Activated naive CD4-positive, alpha-beta T cell treated with anti-CD3 and anti-CD28 coated beads, Interleukin-2, amount 10 ng/mL, durations not matched to agents 7 days and 5 days (primary cell): ENCODE measurements at regions of chr17 and their contacts with region 1.

Region 1: GRCh38 chr17:75896415-75897159 is at the start of gene TRIM65:
- DNase-seq: peak; percentile 84
- H3K4me3 Mint-ChIP-seq: peak within 1 kb of the TSS; percentile 81
- H3K27ac Mint-ChIP-seq: peak within 1 kb of the TSS; percentile 89
- H3K4me1 Mint-ChIP-seq: peaks cover 26% of the 10 kb centered on the region
- H3K27me3 Mint-ChIP-seq: no peaks in the 10 kb centered on the region

Region 2: DNA sequence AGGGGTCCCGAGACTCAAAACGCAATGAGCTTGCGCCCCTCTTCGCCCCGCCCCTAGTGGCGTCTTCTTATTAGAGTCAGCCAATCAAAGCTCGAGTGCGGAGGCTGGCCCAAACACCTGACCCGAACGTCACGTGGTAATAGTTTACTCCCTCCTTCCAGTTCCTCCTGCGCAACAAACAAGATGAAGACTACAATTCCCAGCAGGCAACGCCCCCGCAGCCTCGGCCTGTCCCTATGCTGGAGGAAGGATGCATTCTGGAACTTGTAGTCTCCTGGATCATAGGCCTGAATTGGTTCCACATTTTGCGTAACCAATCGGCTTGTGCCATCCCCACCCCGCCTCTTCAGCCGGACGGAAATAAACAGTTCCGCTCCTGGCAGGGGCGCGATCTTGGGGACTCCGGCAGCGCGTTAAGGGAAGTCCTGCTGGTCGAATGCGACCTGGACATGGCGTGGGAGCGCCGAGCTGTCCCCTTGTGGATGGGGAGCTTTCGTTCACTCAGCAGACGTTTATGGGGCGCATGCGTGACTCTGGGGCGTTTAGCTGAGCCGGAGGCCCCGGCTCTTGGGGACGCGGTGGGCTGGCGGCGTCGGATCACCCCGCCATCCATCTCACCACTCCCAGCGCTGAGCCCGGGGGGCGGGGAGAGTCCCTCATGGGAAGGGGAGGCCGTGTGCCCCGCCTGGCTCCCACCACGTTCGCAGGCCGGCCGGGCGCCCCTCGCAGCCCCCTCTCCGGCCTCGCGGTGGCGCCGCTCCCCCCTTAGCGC is 41.1 kb before region 1 on chr17 and contains the start of gene WBP2:
- CTCF ChIA-PET with region 1: interaction called, 30 read pairs
- DNase-seq: peak; percentile 99
- H3K4me3 Mint-ChIP-seq: no peak within 1 kb of the TSS
- H3K27ac Mint-ChIP-seq: peak within 1 kb of the TSS; percentile 91
- H3K4me1 Mint-ChIP-seq: peaks cover 43% of the 10 kb centered on the region
- H3K27me3 Mint-ChIP-seq: no peaks in the 10 kb centered on the region

Region 3: DNA sequence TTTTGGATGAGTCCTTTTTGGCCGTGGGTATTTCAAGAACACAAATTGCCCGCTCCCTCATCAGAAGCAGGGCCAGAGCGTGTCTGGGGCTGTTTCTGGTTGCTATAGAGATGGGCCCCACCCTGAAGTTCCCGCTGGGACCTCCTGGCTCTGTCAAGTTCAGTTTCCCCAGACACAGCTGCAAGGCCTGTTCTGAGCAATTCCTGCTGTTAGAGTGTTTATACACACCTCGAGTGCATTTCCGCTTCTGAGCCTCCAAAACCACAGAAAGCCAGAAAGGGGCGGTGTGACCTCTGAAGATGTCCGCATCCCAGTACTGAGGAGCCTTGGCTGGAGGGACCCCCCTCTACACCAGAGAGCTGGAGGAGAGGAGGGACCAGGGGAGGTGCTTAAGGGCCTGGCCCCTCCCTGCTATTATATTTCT is 32.1 kb before region 1 on chr17:
- CTCF ChIA-PET with region 1: interaction called, 30 read pairs
- DNase-seq: peak; percentile 77
- H3K4me3 Mint-ChIP-seq: peak overlapping the region; percentile 6
- H3K27ac Mint-ChIP-seq: peak overlapping the region; percentile 91
- H3K4me1 Mint-ChIP-seq: peaks cover 30% of the 10 kb centered on the region
- H3K27me3 Mint-ChIP-seq: no peaks in the 10 kb centered on the region

Region 4: DNA sequence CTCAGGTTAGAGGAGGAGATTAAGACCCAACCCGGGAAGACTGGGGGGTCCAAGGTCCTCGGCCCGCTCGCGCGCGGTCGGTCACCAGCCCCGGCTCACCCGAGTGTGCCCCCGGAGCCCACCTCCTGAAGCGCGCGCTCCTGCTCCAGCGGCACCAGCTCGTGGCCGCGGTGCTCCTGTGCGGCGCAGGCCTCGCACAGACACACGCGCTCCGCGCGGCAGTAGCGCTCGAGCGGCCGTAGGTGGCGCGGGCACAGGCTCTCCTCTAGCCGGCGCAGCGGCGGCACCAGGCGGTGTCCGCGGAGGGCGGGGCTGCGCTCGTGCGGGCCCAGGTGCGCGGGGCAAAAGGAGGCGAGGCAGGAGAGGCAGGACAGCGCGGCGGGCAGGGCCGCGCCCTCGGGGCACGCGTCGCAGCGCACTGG is 18.8 kb before region 1 on chr17:
- CTCF ChIA-PET with region 1: interaction called, 56 read pairs
- DNase-seq: peak; percentile 85
- H3K4me3 Mint-ChIP-seq: peak overlapping the region; percentile 97
- H3K27ac Mint-ChIP-seq: peak overlapping the region; percentile 93
- H3K4me1 Mint-ChIP-seq: peaks cover 62% of the 10 kb centered on the region
- H3K27me3 Mint-ChIP-seq: peaks cover 48% of the 10 kb centered on the region